ENCODE measurements at regions of chr7 and their contacts with region 1.

Region 1: GRCh38 chr7:156892821-156893706 is at the start of gene LMBR1:
- DNase-seq: peak; percentile 98
- H3K4me3 ChIP-seq: peak within 1 kb of the TSS; percentile 79 to 92 (median 85)
- H3K27ac ChIP-seq: peak within 1 kb of the TSS; percentile 90 to 96 (median 96)
- H3K4me1 ChIP-seq: peaks cover 17 to 30% (median 28%) of the 10 kb centered on the region in 4 donors
- H3K27me3 ChIP-seq: no peaks in the 10 kb centered on the region
- CTCF ChIP-seq: peak; percentile 42 to 86 (median 64)
- EP300 ChIP-seq: no peak
- POLR2A ChIP-seq: peak; percentile 41
- total RNA-seq, gene LMBR1: 38.0 to 81.3 (median 56.4) TPM

Region 2: DNA sequence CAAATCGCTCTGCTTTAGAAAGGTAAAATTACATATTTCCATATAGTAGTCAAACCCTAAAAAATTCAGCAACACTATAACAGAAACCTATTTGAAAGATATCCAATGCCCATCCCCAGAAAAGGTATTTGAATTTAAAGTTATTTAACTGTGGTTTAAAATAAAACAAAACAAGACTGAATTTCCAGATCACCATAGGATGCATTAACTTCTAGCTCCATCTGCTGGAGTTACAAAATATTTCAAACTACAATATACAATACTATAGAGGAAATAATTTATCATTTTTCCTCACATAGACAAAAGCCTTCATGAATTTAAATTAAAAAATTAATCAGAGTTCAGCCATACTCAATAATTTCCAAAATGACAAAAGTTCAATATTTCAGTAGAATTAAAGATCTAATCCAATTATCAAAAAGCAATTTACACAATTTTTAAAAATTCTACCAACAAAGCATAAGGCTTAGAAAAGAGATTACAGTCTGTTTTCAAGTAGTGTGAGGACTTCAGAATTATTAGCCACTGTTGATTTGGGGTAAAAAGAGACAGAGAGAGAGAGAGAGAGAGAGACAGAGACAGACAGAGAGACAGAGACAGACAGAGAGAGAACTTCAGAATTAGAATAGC is 76.0 kb before region 1 on chr7:
- intact Hi-C with region 1: no loop called
- DNase-seq: no peak
- H3K4me3 ChIP-seq: no peak overlapping the region
- H3K27ac ChIP-seq: no peak overlapping the region
- H3K4me1 ChIP-seq: no peaks in the 10 kb centered on the region
- H3K27me3 ChIP-seq: no peaks in the 10 kb centered on the region
- CTCF ChIP-seq: peak in 2 of 3 experiments; percentile 15 to 21
- EP300 ChIP-seq: no peak
- POLR2A ChIP-seq: no peak

Region 3: GRCh38 chr7:156949541-156950380 is 56.7 kb after region 1 on chr7 and contains the start of gene NOM1:
- intact Hi-C with region 1: loop called (anchors 1 kb)
- DNase-seq: no peak
- H3K4me3 ChIP-seq: peak within 1 kb of the TSS; percentile 80 to 98 (median 96)
- H3K27ac ChIP-seq: peak within 1 kb of the TSS; percentile 66 to 80 (median 70)
- H3K4me1 ChIP-seq: peaks cover 29 to 40% (median 37%) of the 10 kb centered on the region in 4 donors
- H3K27me3 ChIP-seq: peaks cover 0 to 5% (median 0%) of the 10 kb centered on the region in 4 donors
- CTCF ChIP-seq: peak; percentile 80 to 97 (median 96)
- EP300 ChIP-seq: no peak
- POLR2A ChIP-seq: no peak
- total RNA-seq, gene NOM1: 12.6 to 20.8 (median 16.3) TPM

Region 4: DNA sequence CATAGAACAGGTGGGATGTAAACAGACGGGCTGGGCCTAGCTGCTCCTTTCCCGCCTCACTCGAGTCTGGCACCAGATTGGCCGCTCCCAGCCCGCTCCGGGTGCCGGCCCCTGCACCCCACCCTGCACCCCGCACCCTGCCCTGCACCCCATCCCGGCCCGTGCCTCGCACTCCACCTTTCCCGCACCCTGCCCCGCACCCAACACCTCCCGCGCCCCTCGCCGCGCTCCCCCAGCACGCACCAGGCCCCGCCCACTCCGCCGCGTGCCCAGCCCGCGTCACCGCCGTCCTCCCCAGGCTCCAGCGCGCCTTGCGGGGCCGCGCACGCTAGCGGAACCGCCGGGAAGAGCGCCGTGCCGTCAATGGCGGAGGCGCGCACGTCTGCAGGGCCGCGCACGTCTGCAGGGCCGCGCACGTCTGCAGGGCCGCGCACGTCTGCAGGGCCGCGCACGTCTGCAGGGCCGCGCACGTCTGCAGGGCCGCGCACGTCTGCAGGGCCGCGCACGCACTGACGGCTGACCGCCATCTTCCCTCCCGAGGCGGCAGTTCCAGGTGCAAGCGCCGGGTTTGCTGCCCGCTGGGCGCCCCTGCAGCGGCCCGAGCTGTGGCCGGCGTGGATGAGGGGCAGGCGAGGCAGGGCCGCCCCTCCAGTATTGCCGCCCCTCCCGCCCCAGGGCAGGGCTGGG is 245.5 kb after region 1 on chr7 and contains the start of gene UBE3C:
- intact Hi-C with region 1: loop called (anchors 10 kb)
- DNase-seq: no peak
- H3K4me3 ChIP-seq: peak within 1 kb of the TSS; percentile 68 to 84 (median 80)
- H3K27ac ChIP-seq: peak within 1 kb of the TSS; percentile 92 to 93 (median 92)
- H3K4me1 ChIP-seq: peaks cover 22 to 42% (median 37%) of the 10 kb centered on the region in 4 donors
- H3K27me3 ChIP-seq: no peaks in the 10 kb centered on the region
- CTCF ChIP-seq: peak in 1 of 3 experiments; percentile 17
- EP300 ChIP-seq: no peak
- POLR2A ChIP-seq: no peak
- total RNA-seq, gene UBE3C: 66.1 to 93.3 (median 85.5) TPM

Measured in esophagus muscularis mucosa (tissue), 4 donors.